ENCODE measurements at regions of chr19 and their contacts with region 1.

Region 1: GRCh38 chr19:57443120-57443696 is 8.1 kb downstream of the ZNF749 start:
- DNase-seq: no peak
- H3K4me3 ChIP-seq: no peak overlapping the region
- H3K27ac ChIP-seq: no peak overlapping the region
- H3K4me1 ChIP-seq: no peaks in the 10 kb centered on the region
- H3K27me3 ChIP-seq: no peaks in the 10 kb centered on the region
- CTCF ChIP-seq: no peak
- POLR2A ChIP-seq: no peak

Region 2: DNA sequence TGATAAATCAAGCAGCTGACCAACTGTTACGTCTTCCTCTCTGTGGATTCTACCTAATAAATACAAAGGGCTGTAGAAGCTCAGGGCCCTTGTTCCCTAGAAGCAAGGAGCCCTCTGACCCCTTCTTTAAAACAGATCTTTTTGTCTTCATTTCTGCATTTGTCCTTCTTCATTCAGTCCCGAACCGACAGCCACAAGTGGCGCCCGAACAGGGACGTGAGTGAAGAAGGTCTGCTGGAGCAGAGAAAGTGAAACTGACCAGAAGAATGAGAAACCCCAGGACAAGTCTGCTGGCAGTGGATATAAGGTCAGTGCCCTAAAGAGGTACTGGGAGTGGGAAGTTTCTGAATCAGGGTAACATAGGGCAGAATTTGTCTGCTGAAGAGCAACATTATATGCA is 69.6 kb after region 1 on chr19:
- intact Hi-C with region 1: no loop called
- DNase-seq: no peak
- H3K4me3 ChIP-seq: no peak overlapping the region
- H3K27ac ChIP-seq: no peak overlapping the region
- H3K4me1 ChIP-seq: no peaks in the 10 kb centered on the region
- H3K27me3 ChIP-seq: no peaks in the 10 kb centered on the region
- CTCF ChIP-seq: no peak
- POLR2A ChIP-seq: no peak

Region 3: DNA sequence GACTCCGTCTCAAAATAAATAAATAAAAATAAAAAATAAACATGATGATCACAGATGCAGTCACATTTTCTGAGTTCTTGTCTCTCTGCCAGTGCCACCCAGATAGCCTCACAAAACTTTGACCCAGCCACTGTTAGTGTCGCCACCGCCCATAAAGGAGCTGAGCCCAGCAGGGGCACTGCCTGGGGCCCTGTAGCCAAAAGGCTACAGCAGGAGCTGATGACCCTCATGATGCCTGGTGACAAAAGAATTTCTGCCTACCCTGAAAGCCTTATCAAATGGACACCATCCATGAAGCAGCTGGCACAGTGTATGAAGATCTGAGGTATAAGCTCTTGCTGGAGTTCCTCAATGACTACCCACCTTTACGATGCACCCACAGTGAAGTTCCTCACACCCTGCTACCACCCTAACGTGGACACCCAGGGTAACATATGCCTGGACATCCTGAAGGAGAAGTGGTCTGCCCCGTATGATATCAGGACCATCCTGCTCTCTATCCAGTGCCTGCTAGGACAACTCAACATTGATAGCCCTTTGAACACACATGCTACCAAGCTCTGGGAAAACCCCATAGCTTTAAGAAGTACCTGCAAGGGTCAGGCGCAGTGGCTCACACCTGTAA is 424.8 kb after region 1 on chr19:
- intact Hi-C with region 1: no loop called
- DNase-seq: no peak
- H3K4me3 ChIP-seq: no peak overlapping the region
- H3K27ac ChIP-seq: no peak overlapping the region
- H3K4me1 ChIP-seq: no peaks in the 10 kb centered on the region
- H3K27me3 ChIP-seq: no peaks in the 10 kb centered on the region
- CTCF ChIP-seq: no peak
- POLR2A ChIP-seq: no peak

Region 4: GRCh38 chr19:58261968-58262921 is 819.0 kb after region 1 on chr19:
- intact Hi-C with region 1: loop called (anchors 5 kb)
- DNase-seq: no peak
- H3K4me3 ChIP-seq: peak overlapping the region in 1 of 2 donors; percentile 3
- H3K27ac ChIP-seq: no peak overlapping the region
- H3K4me1 ChIP-seq: no peaks in the 10 kb centered on the region
- H3K27me3 ChIP-seq: no peaks in the 10 kb centered on the region
- CTCF ChIP-seq: no peak
- POLR2A ChIP-seq: no peak

Measured in vagina (tissue), 2 donors.